Activated naive CD4-positive, alpha-beta T cell treated with anti-CD3 and anti-CD28 coated beads, Interleukin-2, amount 10 ng/mL, durations not matched to agents 7 days and 5 days (primary cell): ENCODE measurements at regions of chr3 and their contacts with region 1.

Region 1: GRCh38 chr3:87260270-87260669 is 16.1 kb downstream of the POU1F1 start:
- DNase-seq: peak; percentile 56
- H3K4me3 Mint-ChIP-seq: no peak overlapping the region
- H3K27ac Mint-ChIP-seq: no peak overlapping the region
- H3K4me1 Mint-ChIP-seq: no peaks in the 10 kb centered on the region
- H3K27me3 Mint-ChIP-seq: peaks cover 6% of the 10 kb centered on the region

Region 2: GRCh38 chr3:87120881-87121280 is 139.4 kb before region 1 on chr3:
- CTCF ChIA-PET with region 1: no interaction called
- DNase-seq: no peak
- H3K4me3 Mint-ChIP-seq: no peak overlapping the region
- H3K27ac Mint-ChIP-seq: no peak overlapping the region
- H3K4me1 Mint-ChIP-seq: no peaks in the 10 kb centered on the region
- H3K27me3 Mint-ChIP-seq: no peaks in the 10 kb centered on the region

Region 3: DNA sequence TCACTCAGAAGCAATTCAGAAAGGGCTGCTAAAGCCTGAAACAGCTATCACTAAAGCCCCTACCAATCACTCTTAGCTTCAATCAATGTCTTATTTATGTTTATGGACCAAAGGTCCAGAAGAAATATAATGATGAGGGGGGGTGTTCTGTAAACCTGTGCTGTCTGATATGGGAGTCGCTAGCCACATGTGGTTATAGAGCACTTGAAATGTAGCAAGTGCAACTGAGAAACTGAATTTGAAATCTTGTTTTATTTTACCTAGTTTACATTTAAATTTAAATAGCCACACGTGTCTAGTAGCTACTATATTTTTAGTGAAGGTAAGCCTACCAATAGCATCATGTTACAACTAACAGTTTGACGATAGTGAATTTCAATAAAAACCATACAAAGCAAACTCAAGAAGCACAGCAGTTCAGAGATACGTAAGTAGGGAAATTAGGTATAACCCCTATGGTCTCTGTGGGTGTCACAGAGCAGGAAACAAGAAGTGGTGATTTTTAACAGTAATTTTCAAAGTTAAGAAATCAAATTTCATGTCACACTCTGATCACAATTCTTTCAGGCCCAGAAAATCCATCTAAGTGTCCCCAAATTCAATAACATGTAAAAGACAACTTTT is 12.6 kb after region 1 on chr3:
- CTCF ChIA-PET with region 1: interaction called, 25 read pairs
- DNase-seq: no peak
- H3K4me3 Mint-ChIP-seq: no peak overlapping the region
- H3K27ac Mint-ChIP-seq: no peak overlapping the region
- H3K4me1 Mint-ChIP-seq: peaks cover 41% of the 10 kb centered on the region
- H3K27me3 Mint-ChIP-seq: no peaks in the 10 kb centered on the region

Region 4: GRCh38 chr3:88003115-88003755 is 743.0 kb after region 1 on chr3:
- CTCF ChIA-PET with region 1: interaction called, 12 read pairs
- DNase-seq: no peak
- H3K4me3 Mint-ChIP-seq: no peak overlapping the region
- H3K27ac Mint-ChIP-seq: no peak overlapping the region
- H3K4me1 Mint-ChIP-seq: peaks cover 9% of the 10 kb centered on the region
- H3K27me3 Mint-ChIP-seq: peaks cover 5% of the 10 kb centered on the region